Caco-2 (cell line): ENCODE measurements at regions of chr4 and their contacts with region 1.

Region 1: GRCh38 chr4:99462875-99463464 is 27.8 kb upstream of the ADH7 start:
- DNase-seq: peak; percentile 60 to 75
- H3K4me3 ChIP-seq: no peak overlapping the region
- H3K4me3 Mint-ChIP-seq: no peak overlapping the region
- H3K27ac Mint-ChIP-seq: no peak overlapping the region
- H3K4me1 ChIP-seq: peaks cover 8% of the 10 kb centered on the region; the same call in 1 of the 2 replicates
- H3K4me1 Mint-ChIP-seq: peaks cover 9% of the 10 kb centered on the region
- H3K27me3 ChIP-seq: no peaks in the 10 kb centered on the region
- H3K27me3 Mint-ChIP-seq: peaks cover 4% of the 10 kb centered on the region
- CTCF ChIP-seq: peak; percentile 72 to 85

Region 2: GRCh38 chr4:99067617-99068016 is 395.4 kb before region 1 on chr4:
- CTCF ChIA-PET with region 1: no interaction called
- POLR2A ChIA-PET with region 1: no interaction called
- intact Hi-C with region 1: loop called (anchors 2 kb)
- DNase-seq: no peak
- H3K4me3 ChIP-seq: no peak overlapping the region
- H3K4me3 Mint-ChIP-seq: no peak overlapping the region
- H3K27ac Mint-ChIP-seq: no peak overlapping the region
- H3K4me1 ChIP-seq: no peaks in the 10 kb centered on the region; the same call in 1 of the 2 replicates
- H3K4me1 Mint-ChIP-seq: no peaks in the 10 kb centered on the region
- H3K27me3 ChIP-seq: no peaks in the 10 kb centered on the region
- H3K27me3 Mint-ChIP-seq: no peaks in the 10 kb centered on the region
- CTCF ChIP-seq: no peak

Region 3: GRCh38 chr4:99117876-99118693 is 344.9 kb before region 1 on chr4:
- CTCF ChIA-PET with region 1: no interaction called
- POLR2A ChIA-PET with region 1: no interaction called
- intact Hi-C with region 1: loop called (anchors 1 kb)
- DNase-seq: no peak
- H3K4me3 ChIP-seq: no peak overlapping the region
- H3K4me3 Mint-ChIP-seq: no peak overlapping the region
- H3K27ac Mint-ChIP-seq: no peak overlapping the region
- H3K4me1 ChIP-seq: no peaks in the 10 kb centered on the region
- H3K4me1 Mint-ChIP-seq: no peaks in the 10 kb centered on the region
- H3K27me3 ChIP-seq: no peaks in the 10 kb centered on the region
- H3K27me3 Mint-ChIP-seq: no peaks in the 10 kb centered on the region
- CTCF ChIP-seq: peak in 1 of 2 experiments; percentile 3

Region 4: GRCh38 chr4:99405433-99406115 is 57.4 kb before region 1 on chr4:
- CTCF ChIA-PET with region 1: interaction called, 3 read pairs
- POLR2A ChIA-PET with region 1: no interaction called
- intact Hi-C with region 1: loop called (anchors 2 kb)
- DNase-seq: peak; percentile 69 to 78
- H3K4me3 ChIP-seq: no peak overlapping the region
- H3K4me3 Mint-ChIP-seq: no peak overlapping the region
- H3K27ac Mint-ChIP-seq: peak overlapping the region; percentile 37
- H3K4me1 ChIP-seq: peaks cover 23% of the 10 kb centered on the region
- H3K4me1 Mint-ChIP-seq: peaks cover 11% of the 10 kb centered on the region
- H3K27me3 ChIP-seq: no peaks in the 10 kb centered on the region
- H3K27me3 Mint-ChIP-seq: no peaks in the 10 kb centered on the region
- CTCF ChIP-seq: peak; percentile 77 to 88

Region 5: GRCh38 chr4:99417125-99417524 is 45.8 kb before region 1 on chr4:
- CTCF ChIA-PET with region 1: no interaction called
- POLR2A ChIA-PET with region 1: no interaction called
- intact Hi-C with region 1: loop called (anchors 2 kb)
- DNase-seq: no peak
- H3K4me3 ChIP-seq: no peak overlapping the region
- H3K4me3 Mint-ChIP-seq: no peak overlapping the region
- H3K27ac Mint-ChIP-seq: no peak overlapping the region
- H3K4me1 ChIP-seq: 0 out of 2 replicates have a peak, but pooled peaks cover 7% of the 10 kb centered on the region
- H3K4me1 Mint-ChIP-seq: no peaks in the 10 kb centered on the region
- H3K27me3 ChIP-seq: no peaks in the 10 kb centered on the region
- H3K27me3 Mint-ChIP-seq: no peaks in the 10 kb centered on the region
- CTCF ChIP-seq: no peak

Region 6: DNA sequence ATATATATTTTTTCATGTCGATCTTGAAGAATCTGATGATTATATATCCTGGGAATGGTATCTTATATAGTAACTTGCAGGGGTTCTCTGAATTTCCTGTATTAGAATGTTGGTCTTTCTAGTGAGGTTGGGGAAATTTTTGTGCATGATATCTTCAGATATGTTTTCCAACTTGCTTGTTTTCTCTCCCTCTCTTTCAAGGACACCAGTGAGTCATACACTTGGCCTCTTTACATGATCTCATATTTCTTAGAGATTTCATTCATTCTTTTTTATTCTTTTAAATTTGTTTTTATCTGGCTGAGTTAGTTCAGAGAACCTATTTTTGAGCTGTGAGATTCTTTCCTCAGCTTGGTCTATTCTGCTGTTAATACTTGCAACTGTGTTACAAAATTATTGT is 20.7 kb after region 1 on chr4:
- CTCF ChIA-PET with region 1: no interaction called
- POLR2A ChIA-PET with region 1: no interaction called
- intact Hi-C with region 1: no loop called
- DNase-seq: no peak
- H3K4me3 ChIP-seq: no peak overlapping the region
- H3K4me3 Mint-ChIP-seq: no peak overlapping the region
- H3K27ac Mint-ChIP-seq: no peak overlapping the region
- H3K4me1 ChIP-seq: no peaks in the 10 kb centered on the region
- H3K4me1 Mint-ChIP-seq: no peaks in the 10 kb centered on the region
- H3K27me3 ChIP-seq: no peaks in the 10 kb centered on the region
- H3K27me3 Mint-ChIP-seq: peaks cover 4% of the 10 kb centered on the region
- CTCF ChIP-seq: no peak